ENCODE measurements at regions of chr6 and their contacts with region 1.

Region 1: DNA sequence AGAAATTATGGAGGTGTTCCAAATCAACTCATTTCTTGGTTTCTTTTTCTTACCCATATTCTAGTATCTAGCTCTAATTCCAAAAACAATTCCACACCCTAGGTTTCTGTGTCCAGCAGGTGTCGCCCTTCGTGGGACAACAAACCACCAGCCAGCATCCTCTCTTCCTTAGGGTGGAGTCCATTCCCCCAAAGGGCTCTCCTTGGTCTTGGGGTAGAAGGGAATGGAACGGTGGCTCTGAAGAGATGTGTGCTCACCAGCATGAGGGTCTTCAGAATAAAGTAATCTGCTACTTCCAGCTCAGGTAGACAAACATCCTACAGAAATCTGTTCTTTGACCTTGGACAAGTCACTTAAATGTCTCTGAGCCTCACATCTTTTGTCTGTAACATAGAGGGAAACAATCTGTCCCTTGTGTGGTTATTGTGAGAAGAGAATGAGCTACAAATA is 7.2 kb downstream of the HLA-DMB start:
- DNase-seq: peak; percentile 76
- H3K4me3 ChIP-seq: no peak overlapping the region
- H3K27ac ChIP-seq: no peak overlapping the region
- H3K4me1 ChIP-seq: no peaks in the 10 kb centered on the region
- H3K27me3 ChIP-seq: peaks cover 41 to 73% of the 10 kb centered on the region in 2 experiments
- CTCF ChIP-seq: peak; percentile 73
- POLR2A ChIP-seq: no peak

Region 2: GRCh38 chr6:32838114-32838958 is 95.3 kb before region 1 on chr6 and contains the start of gene TAP2:
- CTCF ChIA-PET with region 1: interaction called, 12 read pairs
- POLR2A ChIA-PET with region 1: interaction called, 3 read pairs
- dilution Hi-C with region 1: no loop called
- intact Hi-C with region 1: no loop called
- DNase-seq: peak; percentile 94
- H3K4me3 ChIP-seq: peak within 1 kb of the TSS; percentile 30 to 89 (median 70)
- H3K27ac ChIP-seq: peak within 1 kb of the TSS; percentile 54
- H3K4me1 ChIP-seq: peaks cover 9% of the 10 kb centered on the region
- H3K27me3 ChIP-seq: no peaks in the 10 kb centered on the region
- CTCF ChIP-seq: peak; percentile 92 to 99
- POLR2A ChIP-seq: peak; percentile 64
- total RNA-seq, gene TAP2: 49.7 and 57.8 TPM in 2 replicates

Region 3: GRCh38 chr6:32894080-32895005 is 39.3 kb before region 1 on chr6:
- CTCF ChIA-PET with region 1: interaction called, 26 read pairs
- POLR2A ChIA-PET with region 1: no interaction called
- dilution Hi-C with region 1: no loop called
- intact Hi-C with region 1: loop called (anchors 5 kb)
- DNase-seq: peak; percentile 98
- H3K4me3 ChIP-seq: peak overlapping the region; percentile 24 to 67 (median 61)
- H3K27ac ChIP-seq: peak overlapping the region; percentile 45
- H3K4me1 ChIP-seq: peaks cover 17% of the 10 kb centered on the region
- H3K27me3 ChIP-seq: peaks cover 0 to 1% of the 10 kb centered on the region in 2 experiments
- CTCF ChIP-seq: no peak
- POLR2A ChIP-seq: peak; percentile 72

Region 4: GRCh38 chr6:32912951-32913350 is 20.7 kb before region 1 on chr6:
- CTCF ChIA-PET with region 1: interaction called, 22 read pairs
- POLR2A ChIA-PET with region 1: no interaction called
- dilution Hi-C with region 1: no loop called
- intact Hi-C with region 1: no loop called
- DNase-seq: no peak
- H3K4me3 ChIP-seq: no peak overlapping the region
- H3K27ac ChIP-seq: no peak overlapping the region
- H3K4me1 ChIP-seq: no peaks in the 10 kb centered on the region
- H3K27me3 ChIP-seq: peaks cover 8 to 11% of the 10 kb centered on the region in 2 experiments
- CTCF ChIP-seq: no peak
- POLR2A ChIP-seq: no peak

Region 5: DNA sequence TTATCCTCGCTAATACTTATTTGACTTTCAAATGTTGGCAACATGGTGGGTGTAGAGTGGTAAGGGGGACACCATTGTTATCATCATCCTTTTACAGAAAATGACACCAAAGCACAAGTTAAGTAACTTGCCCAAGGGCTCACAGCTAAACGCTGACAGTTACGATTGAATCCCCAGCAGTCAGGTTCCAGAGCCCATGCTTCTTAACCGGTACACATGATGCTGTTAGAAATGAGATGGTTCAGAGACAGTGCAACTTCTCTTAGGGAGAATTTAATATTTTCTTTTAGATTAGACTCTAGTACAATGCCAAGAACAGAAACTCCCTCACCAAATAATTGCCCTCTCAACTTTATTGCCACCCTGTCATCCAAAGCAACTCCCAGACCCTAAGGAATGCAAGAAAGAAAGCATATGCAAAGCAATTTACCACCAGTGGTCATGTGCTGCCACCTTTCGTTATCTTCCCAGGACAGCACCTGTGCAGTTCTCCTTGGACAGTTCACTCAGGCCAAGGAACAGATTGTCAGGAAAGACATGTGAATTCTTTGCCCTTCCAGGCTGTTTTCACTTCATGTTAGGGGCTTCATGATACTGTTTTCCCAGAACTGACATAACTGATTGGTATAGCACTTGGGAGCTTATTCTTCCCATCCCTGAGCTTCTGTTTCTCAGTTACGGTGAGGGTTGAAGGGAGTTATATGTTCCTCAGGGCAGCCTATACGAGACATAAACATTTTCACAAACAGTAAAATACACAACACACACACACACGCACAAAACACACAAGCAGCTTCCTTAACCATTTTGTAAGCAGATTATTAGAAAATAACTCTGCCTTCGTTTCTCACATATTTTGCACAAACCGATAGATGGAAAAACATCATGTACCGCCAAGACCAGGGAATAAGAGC is 14.1 kb after region 1 on chr6:
- CTCF ChIA-PET with region 1: interaction called, 174 read pairs
- POLR2A ChIA-PET with region 1: no interaction called
- dilution Hi-C with region 1: no loop called
- intact Hi-C with region 1: loop called (anchors 1 kb)
- DNase-seq: peak; percentile 58
- H3K4me3 ChIP-seq: no peak overlapping the region
- H3K27ac ChIP-seq: no peak overlapping the region
- H3K4me1 ChIP-seq: no peaks in the 10 kb centered on the region
- H3K27me3 ChIP-seq: peaks cover 5 to 28% of the 10 kb centered on the region in 2 experiments
- CTCF ChIP-seq: peak; percentile 34 to 39
- POLR2A ChIP-seq: no peak

Region 6: GRCh38 chr6:32964776-32965175 is 31.1 kb after region 1 on chr6:
- CTCF ChIA-PET with region 1: interaction called, 187 read pairs
- POLR2A ChIA-PET with region 1: no interaction called
- dilution Hi-C with region 1: no loop called
- intact Hi-C with region 1: no loop called
- DNase-seq: no peak
- H3K4me3 ChIP-seq: no peak overlapping the region
- H3K27ac ChIP-seq: no peak overlapping the region
- H3K4me1 ChIP-seq: peaks cover 26% of the 10 kb centered on the region
- H3K27me3 ChIP-seq: no peaks in the 10 kb centered on the region
- CTCF ChIP-seq: no peak
- POLR2A ChIP-seq: no peak